PC-3 (cell line): ENCODE measurements at regions of chr3 and their contacts with region 1.

Region 1: DNA sequence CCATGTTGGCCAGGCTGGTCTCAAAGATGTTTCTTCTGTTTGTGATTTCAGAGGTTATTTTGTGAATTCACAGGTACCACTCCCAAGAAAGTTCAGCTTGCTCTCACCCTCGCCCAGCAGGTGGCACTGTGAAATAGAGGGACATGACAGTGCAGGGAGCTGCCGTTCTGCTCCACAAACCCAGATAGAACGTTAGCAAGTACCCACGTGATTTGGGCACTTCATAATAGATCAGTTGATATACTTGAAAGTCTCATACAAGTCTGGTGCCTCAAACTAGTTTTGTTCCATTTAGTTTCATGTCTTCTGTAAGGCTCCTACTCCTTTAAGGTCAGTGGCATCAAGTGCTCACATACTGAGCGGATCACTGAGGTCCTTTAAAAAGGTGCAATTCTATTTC is 45.5 kb downstream of the FILIP1L start:
- DNase-seq: peak; percentile 90
- ATAC-seq: peak; percentile 79
- H3K4me3 ChIP-seq: no peak overlapping the region
- H3K27ac ChIP-seq: no peak overlapping the region
- H3K4me1 ChIP-seq: peaks cover 43% of the 10 kb centered on the region
- H3K27me3 ChIP-seq: no peaks in the 10 kb centered on the region
- CTCF ChIP-seq: peak; percentile 94

Region 2: GRCh38 chr3:99945328-99945995 is 123.4 kb before region 1 on chr3:
- CTCF ChIA-PET with region 1: no interaction called
- POLR2A ChIA-PET with region 1: no interaction called
- intact Hi-C with region 1: no loop called
- DNase-seq: no peak
- ATAC-seq: no peak
- H3K4me3 ChIP-seq: no peak overlapping the region
- H3K27ac ChIP-seq: no peak overlapping the region
- H3K4me1 ChIP-seq: peaks cover 27% of the 10 kb centered on the region
- H3K27me3 ChIP-seq: no peaks in the 10 kb centered on the region
- CTCF ChIP-seq: no peak

Region 3: GRCh38 chr3:100047455-100048141 is 21.2 kb before region 1 on chr3:
- CTCF ChIA-PET with region 1: interaction called, 5 read pairs
- POLR2A ChIA-PET with region 1: no interaction called
- intact Hi-C with region 1: loop called (anchors 1 kb)
- DNase-seq: peak; percentile 98
- ATAC-seq: peak; percentile 96
- H3K4me3 ChIP-seq: peak overlapping the region; percentile 39
- H3K27ac ChIP-seq: peak overlapping the region; percentile 86
- H3K4me1 ChIP-seq: peaks cover 48% of the 10 kb centered on the region
- H3K27me3 ChIP-seq: no peaks in the 10 kb centered on the region
- CTCF ChIP-seq: no peak

Region 4: GRCh38 chr3:100159331-100160153 is 90.7 kb after region 1 on chr3:
- CTCF ChIA-PET with region 1: interaction called, 3 read pairs
- POLR2A ChIA-PET with region 1: no interaction called
- intact Hi-C with region 1: loop called (anchors 1 kb)
- DNase-seq: peak; percentile 87
- ATAC-seq: peak; percentile 77
- H3K4me3 ChIP-seq: peak overlapping the region; percentile 22; the same call in 1 of the 2 replicates
- H3K27ac ChIP-seq: peak overlapping the region; percentile 65
- H3K4me1 ChIP-seq: peaks cover 33% of the 10 kb centered on the region
- H3K27me3 ChIP-seq: no peaks in the 10 kb centered on the region
- CTCF ChIP-seq: no peak

Region 5: GRCh38 chr3:100254168-100254777 is 185.4 kb after region 1 on chr3:
- CTCF ChIA-PET with region 1: interaction called, 32 read pairs
- POLR2A ChIA-PET with region 1: interaction called, 6 read pairs
- intact Hi-C with region 1: loop called (anchors 1 kb)
- DNase-seq: peak; percentile 82
- ATAC-seq: peak; percentile 94
- H3K4me3 ChIP-seq: no peak overlapping the region
- H3K27ac ChIP-seq: no peak overlapping the region
- H3K4me1 ChIP-seq: peaks cover 20% of the 10 kb centered on the region
- H3K27me3 ChIP-seq: no peaks in the 10 kb centered on the region
- CTCF ChIP-seq: peak; percentile 97

Region 6: DNA sequence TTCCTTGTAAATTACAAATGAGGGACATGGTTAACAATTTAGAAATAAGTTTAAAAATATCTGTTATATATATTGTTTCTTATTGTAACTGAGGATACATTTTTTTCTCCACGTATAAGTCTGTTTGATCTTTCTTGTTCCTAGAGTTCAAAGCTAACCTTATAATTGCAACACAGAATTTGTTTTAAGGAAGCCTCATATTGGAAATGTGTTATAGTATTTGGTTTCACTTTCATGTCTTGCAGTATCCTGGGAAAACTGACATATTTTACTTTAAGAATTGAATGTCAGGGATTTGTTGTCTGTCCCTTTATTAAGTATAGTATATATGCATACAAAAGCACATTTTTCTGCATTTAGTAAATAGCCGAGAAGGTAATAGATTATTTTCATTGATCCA is 242.2 kb after region 1 on chr3:
- CTCF ChIA-PET with region 1: no interaction called
- POLR2A ChIA-PET with region 1: no interaction called
- intact Hi-C with region 1: loop called (anchors 2 kb)
- DNase-seq: no peak
- ATAC-seq: no peak
- H3K4me3 ChIP-seq: peak overlapping the region; percentile 14
- H3K27ac ChIP-seq: peak overlapping the region; percentile 47
- H3K4me1 ChIP-seq: peaks cover 21% of the 10 kb centered on the region
- H3K27me3 ChIP-seq: no peaks in the 10 kb centered on the region
- CTCF ChIP-seq: no peak